ENCODE measurements at regions of chr19 and their contacts with region 1.

Region 1: GRCh38 chr19:40305403-40305802 is 20.3 kb upstream of the AKT2 start:
- DNase-seq: peak; percentile 38
- ATAC-seq: peak; percentile 87
- H3K4me3 ChIP-seq: no peak overlapping the region
- H3K27ac ChIP-seq: no peak overlapping the region
- H3K4me1 ChIP-seq: no peaks in the 10 kb centered on the region
- H3K27me3 ChIP-seq: no peaks in the 10 kb centered on the region
- CTCF ChIP-seq: peak; percentile 59 to 83 (median 77); a peak in 5 of 6 replicates
- EP300 ChIP-seq: no peak
- POLR2A ChIP-seq: no peak
- RAD21 ChIP-seq: peak; percentile 95

Region 2: GRCh38 chr19:40139533-40140287 is 165.7 kb before region 1 on chr19:
- CTCF ChIA-PET with region 1: interaction called, 26 read pairs
- POLR2A ChIA-PET with region 1: no interaction called
- RAD21 ChIA-PET with region 1: interaction called, 5 read pairs
- SMC1A ChIA-PET with region 1: interaction called, 10 read pairs
- in situ Hi-C with region 1: no loop called
- intact Hi-C with region 1: loop called (anchors 5 kb)
- DNase-seq: no peak
- ATAC-seq: peak; percentile 44
- H3K4me3 ChIP-seq: no peak overlapping the region
- H3K27ac ChIP-seq: no peak overlapping the region
- H3K4me1 ChIP-seq: peaks cover 18% of the 10 kb centered on the region
- H3K27me3 ChIP-seq: no peaks in the 10 kb centered on the region
- CTCF ChIP-seq: peak; percentile 56 to 87 (median 74)
- EP300 ChIP-seq: no peak
- POLR2A ChIP-seq: no peak
- RAD21 ChIP-seq: peak; percentile 99

Region 3: GRCh38 chr19:40157059-40157458 is 148.3 kb before region 1 on chr19:
- CTCF ChIA-PET with region 1: no interaction called
- POLR2A ChIA-PET with region 1: no interaction called
- RAD21 ChIA-PET with region 1: no interaction called
- SMC1A ChIA-PET with region 1: no interaction called
- in situ Hi-C with region 1: no loop called
- intact Hi-C with region 1: no loop called
- DNase-seq: no peak
- ATAC-seq: no peak
- H3K4me3 ChIP-seq: no peak overlapping the region
- H3K27ac ChIP-seq: no peak overlapping the region
- H3K4me1 ChIP-seq: peaks cover 12% of the 10 kb centered on the region
- H3K27me3 ChIP-seq: no peaks in the 10 kb centered on the region
- CTCF ChIP-seq: no peak
- EP300 ChIP-seq: no peak
- POLR2A ChIP-seq: no peak
- RAD21 ChIP-seq: no peak

Region 4: DNA sequence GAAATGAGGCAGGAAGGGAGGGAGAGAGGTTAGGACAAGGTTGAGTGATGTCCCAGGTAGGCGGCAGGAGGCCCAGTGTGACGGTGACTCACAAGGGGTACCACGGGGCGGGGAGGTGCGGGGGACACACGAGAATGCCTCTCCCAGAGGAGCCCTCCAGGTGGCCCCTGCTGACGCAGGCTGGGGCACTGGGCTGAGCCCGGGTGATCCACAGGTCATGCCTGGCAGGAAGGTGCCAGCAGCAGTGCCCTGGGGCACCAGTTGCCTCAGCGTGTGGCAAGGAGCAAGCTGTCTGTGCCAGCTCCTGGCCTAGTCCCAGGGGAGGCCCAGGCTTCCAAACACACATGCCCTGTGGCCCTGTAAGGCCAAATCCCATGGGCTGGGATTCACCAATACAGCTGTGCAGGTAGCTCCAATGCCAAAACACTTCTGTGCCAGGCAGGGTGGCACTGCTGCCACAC is 48.3 kb before region 1 on chr19:
- CTCF ChIA-PET with region 1: no interaction called
- POLR2A ChIA-PET with region 1: no interaction called
- RAD21 ChIA-PET with region 1: no interaction called
- SMC1A ChIA-PET with region 1: no interaction called
- in situ Hi-C with region 1: no loop called
- intact Hi-C with region 1: no loop called
- DNase-seq: no peak
- ATAC-seq: no peak
- H3K4me3 ChIP-seq: no peak overlapping the region
- H3K27ac ChIP-seq: no peak overlapping the region
- H3K4me1 ChIP-seq: no peaks in the 10 kb centered on the region
- H3K27me3 ChIP-seq: no peaks in the 10 kb centered on the region
- CTCF ChIP-seq: no peak
- EP300 ChIP-seq: no peak
- POLR2A ChIP-seq: no peak
- RAD21 ChIP-seq: no peak

Region 5: DNA sequence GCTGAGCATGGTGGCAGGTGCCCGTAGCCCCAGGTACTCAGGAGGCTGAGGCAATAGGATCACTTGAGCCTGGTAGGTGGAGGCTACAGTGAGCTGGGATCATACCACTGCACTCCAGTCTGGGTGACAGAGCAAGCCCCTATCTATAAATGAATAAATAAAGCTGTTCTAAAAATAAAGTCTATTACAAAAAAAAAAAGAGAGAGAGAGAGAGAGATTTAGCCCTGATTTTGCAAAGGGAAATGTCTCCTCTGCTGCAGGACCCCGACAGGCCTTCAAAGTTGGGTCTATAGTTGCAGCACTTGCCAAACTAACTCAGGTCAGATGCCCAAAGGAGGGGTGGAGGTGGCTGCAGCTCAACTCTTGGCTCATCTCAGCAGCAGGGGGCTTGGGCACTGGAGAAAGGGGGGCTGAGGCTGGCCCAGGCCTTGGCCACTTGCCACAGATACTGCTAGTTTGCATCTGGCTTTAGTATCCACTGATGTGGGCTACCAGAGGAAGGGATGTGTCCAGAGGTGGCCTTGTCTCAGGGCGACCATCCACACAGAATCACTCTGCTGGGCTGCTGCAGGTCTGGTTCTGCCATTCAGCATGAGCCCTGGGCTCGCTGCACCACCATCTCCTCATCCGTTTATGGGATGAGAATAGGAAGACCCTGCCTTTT is 10.5 kb after region 1 on chr19:
- CTCF ChIA-PET with region 1: interaction called, 18 read pairs
- POLR2A ChIA-PET with region 1: no interaction called
- RAD21 ChIA-PET with region 1: interaction called, 4 read pairs
- SMC1A ChIA-PET with region 1: interaction called, 9 read pairs
- in situ Hi-C with region 1: no loop called
- intact Hi-C with region 1: no loop called
- DNase-seq: no peak
- ATAC-seq: no peak
- H3K4me3 ChIP-seq: no peak overlapping the region
- H3K27ac ChIP-seq: no peak overlapping the region
- H3K4me1 ChIP-seq: no peaks in the 10 kb centered on the region
- H3K27me3 ChIP-seq: no peaks in the 10 kb centered on the region
- CTCF ChIP-seq: no peak
- EP300 ChIP-seq: no peak
- POLR2A ChIP-seq: no peak
- RAD21 ChIP-seq: no peak

Region 6: DNA sequence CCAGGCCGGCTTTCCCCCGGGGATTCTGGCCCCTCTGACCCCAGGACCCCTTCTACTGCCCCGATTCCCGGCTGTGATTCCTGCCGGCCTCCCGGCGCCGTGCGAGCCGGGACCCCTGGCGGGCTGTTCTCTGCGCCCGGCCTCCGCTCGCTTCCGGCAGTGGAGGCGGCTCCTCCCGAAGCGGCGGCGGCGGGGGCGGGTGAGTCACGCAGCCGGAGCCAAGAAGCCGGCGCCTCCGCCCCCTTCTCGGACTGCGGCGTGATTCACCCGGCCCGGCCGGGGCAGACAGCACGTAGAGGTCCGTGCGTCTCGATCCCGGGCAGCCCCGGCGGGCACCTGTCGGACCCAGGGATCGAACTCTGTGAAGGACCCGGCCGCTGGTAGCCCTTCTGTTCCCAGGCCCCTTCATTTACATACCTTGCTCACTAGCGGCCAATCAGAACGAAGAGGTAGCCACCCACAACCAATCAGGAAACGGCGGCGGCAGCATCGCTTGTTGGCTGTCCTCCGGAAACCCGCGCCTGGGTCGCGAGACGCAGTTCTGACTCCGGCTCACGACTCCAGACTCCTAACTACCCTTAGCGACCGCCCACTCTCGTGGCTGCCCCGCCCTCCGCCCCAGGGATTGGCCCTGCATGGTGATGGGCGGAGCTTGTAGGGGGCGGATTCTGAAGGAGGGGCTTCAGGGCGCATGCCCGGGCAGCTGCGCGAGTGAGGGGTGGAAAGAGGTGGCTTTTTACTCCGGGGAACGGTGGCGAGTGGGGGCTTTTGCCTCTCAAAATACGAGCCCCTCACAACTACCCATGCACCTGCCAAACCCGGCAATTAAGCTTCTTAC is 120.3 kb after region 1 on chr19 and contains the start of gene SERTAD1:
- CTCF ChIA-PET with region 1: interaction called, 19 read pairs
- POLR2A ChIA-PET with region 1: interaction called, 4 read pairs
- RAD21 ChIA-PET with region 1: interaction called, 28 read pairs
- SMC1A ChIA-PET with region 1: interaction called, 14 read pairs
- in situ Hi-C with region 1: no loop called
- intact Hi-C with region 1: no loop called
- DNase-seq: peak; percentile 96
- ATAC-seq: peak; percentile 90
- H3K4me3 ChIP-seq: peak within 1 kb of the TSS; percentile 97
- H3K27ac ChIP-seq: peak within 1 kb of the TSS; percentile 84
- H3K4me1 ChIP-seq: no peaks in the 10 kb centered on the region
- H3K27me3 ChIP-seq: no peaks in the 10 kb centered on the region
- CTCF ChIP-seq: peak; percentile 53 to 89 (median 58)
- EP300 ChIP-seq: no peak
- POLR2A ChIP-seq: peak; percentile 99
- RAD21 ChIP-seq: no peak
- polyA plus RNA-seq, gene SERTAD1: 0.23 to 1.6 TPM

Region 7: GRCh38 chr19:40465557-40466150 is 160.3 kb after region 1 on chr19 and contains the start of gene BLVRB:
- CTCF ChIA-PET with region 1: interaction called, 31 read pairs
- POLR2A ChIA-PET with region 1: interaction called, 3 read pairs
- RAD21 ChIA-PET with region 1: interaction called, 14 read pairs
- SMC1A ChIA-PET with region 1: interaction called, 18 read pairs
- in situ Hi-C with region 1: no loop called
- intact Hi-C with region 1: no loop called
- DNase-seq: peak; percentile 96
- ATAC-seq: peak; percentile 89
- H3K4me3 ChIP-seq: peak within 1 kb of the TSS; percentile 66
- H3K27ac ChIP-seq: peak within 1 kb of the TSS; percentile 61
- H3K4me1 ChIP-seq: peaks cover 31% of the 10 kb centered on the region
- H3K27me3 ChIP-seq: peaks cover 0 to 2% of the 10 kb centered on the region in 2 experiments; a peak in 3 of 4 replicates
- CTCF ChIP-seq: no peak
- EP300 ChIP-seq: no peak
- POLR2A ChIP-seq: peak; percentile 87
- RAD21 ChIP-seq: no peak
- polyA plus RNA-seq, gene BLVRB: 6.3 to 16.3 TPM

Region 8: DNA sequence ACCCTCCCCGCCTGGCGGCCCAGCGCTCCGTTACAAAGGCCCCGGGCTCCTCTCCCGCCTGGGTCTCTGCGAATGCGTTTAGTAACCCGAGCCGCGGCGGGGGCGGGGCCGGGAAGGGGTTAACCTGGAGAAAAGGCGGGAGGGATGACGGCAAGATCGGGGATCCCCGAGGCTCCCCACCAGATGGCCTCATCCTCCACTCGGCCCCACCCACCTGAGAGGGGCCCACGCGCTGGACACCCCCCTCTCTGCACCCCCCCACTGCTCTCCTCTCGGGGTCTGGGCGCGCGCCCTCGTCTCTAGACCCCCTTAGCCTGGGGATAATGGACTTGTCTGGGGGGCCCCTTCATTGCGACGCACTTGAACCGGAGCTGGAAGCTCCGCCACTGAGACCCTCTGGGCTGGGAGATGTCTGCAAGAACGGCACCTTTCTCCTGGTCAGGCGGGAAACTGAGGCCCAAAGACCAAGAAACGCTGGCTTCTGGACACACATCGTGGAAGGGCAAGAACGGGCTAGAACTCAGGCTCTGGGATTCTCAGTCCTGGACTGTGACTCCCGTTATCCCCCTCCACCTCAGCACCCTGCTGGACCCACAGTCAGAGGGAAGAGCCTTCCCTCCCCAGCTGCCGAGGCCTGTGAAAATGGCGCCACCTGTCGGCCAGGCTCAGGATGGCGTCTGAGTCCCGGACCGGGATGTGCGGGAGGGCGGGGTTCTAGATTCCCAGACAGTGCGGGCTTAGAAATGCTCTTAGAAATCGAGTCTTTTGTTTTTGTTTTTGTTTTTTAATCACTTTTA is 292.9 kb after region 1 on chr19:
- CTCF ChIA-PET with region 1: interaction called, 25 read pairs
- POLR2A ChIA-PET with region 1: no interaction called
- RAD21 ChIA-PET with region 1: interaction called, 9 read pairs
- SMC1A ChIA-PET with region 1: interaction called, 3 read pairs
- in situ Hi-C with region 1: loop called (anchors 10 kb)
- intact Hi-C with region 1: loop called (anchors 1 kb)
- DNase-seq: no peak
- ATAC-seq: peak; percentile 84
- H3K4me3 ChIP-seq: no peak overlapping the region
- H3K27ac ChIP-seq: no peak overlapping the region
- H3K4me1 ChIP-seq: peaks cover 11% of the 10 kb centered on the region
- H3K27me3 ChIP-seq: peaks cover 11 to 14% of the 10 kb centered on the region in 2 experiments
- CTCF ChIP-seq: peak; percentile 98 to 99 (median 98); a peak in 5 of 6 replicates
- EP300 ChIP-seq: no peak
- POLR2A ChIP-seq: no peak
- RAD21 ChIP-seq: peak; percentile 98